Endothelial cell of umbilical vein (primary cell): ENCODE measurements at regions of chr14 and their contacts with region 1.

Region 1: DNA sequence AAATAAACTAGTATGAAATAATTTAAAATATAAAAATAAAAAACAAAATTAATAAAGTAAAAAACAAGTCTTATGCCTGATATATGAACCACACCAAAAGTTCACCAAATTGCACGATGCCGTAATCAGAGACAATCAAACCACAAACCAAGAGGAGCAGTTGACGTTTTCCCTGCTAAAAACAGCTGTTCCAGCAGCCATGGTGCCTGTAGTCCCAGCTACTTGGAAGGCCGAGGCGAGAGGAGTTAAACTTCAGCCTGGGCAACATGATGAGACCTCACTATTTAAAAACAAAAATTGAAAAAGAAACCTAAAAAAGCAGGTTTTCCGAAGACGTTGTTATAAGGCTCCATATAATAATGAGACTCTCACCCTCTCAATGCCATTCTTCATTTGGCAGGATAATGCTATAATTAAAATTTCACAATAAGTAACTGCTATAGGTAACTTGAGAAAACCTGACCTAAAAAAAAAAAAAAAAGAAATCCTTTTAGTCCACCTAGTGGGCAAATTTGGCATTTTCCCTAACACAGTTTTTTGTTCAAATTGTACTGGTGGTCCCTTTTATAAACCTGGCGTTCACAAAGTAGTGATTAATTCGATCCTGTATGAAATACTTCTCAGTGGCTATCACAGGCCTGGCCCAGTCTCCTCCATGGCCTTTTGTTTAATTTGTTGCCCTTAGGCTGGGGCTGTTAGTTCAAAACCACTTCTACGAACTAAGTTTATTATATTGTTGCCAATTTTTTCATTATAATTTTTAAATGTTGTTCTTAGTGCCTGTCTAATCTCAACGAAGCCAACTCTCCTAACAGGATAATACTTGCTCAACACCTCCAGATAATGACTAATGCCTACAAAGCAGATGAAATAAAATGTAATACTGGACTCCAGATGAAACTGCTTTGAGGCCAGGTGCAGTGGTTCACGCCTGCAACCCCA is 62.1 kb downstream of the TNFAIP2 start:
- DNase-seq: peak; percentile 71
- H3K4me3 ChIP-seq: no peak overlapping the region
- H3K27ac ChIP-seq: no peak overlapping the region
- H3K4me1 ChIP-seq: no peaks in the 10 kb centered on the region
- H3K27me3 ChIP-seq: peaks cover 17 to 22% of the 10 kb centered on the region in 2 experiments
- CTCF ChIP-seq: peak; percentile 36 to 47
- POLR2A ChIP-seq: no peak

Region 2: DNA sequence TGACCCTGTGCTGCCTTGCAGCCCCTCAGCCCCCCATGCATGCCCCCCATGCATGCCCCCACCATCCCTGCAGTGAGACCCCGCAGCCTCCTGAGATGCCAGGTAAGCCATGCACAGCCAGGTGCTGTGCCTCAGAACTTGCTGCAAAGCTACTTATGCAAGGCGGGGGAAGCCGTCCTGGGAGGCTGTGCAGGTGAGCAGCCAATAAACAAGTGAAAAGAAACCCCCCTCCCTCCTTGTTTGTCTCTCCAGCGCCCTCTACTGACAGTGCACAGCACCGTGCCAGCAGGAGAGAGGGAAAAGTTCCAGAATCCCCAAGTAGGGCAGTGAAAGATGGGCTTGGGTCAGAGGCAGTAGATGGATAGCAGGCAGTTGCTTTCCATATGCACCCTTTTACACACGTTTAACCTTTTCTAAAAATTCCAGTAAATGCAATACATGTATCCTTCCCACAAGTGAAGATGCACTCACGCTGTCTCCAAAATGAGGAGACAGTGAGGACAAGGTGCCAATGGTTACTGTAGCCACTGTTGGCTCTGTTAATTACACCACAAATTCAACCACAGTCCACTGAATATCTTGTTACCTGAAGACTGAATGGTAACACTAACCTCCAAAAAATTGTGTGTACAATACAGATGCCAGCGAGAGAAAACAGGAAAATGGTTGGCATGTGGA is 44.1 kb before region 1 on chr14:
- CTCF ChIA-PET with region 1: interaction called, 3 read pairs
- POLR2A ChIA-PET with region 1: no interaction called
- dilution Hi-C with region 1: no loop called
- intact Hi-C with region 1: loop called (anchors 5 kb)
- DNase-seq: peak; percentile 41
- H3K4me3 ChIP-seq: no peak overlapping the region
- H3K27ac ChIP-seq: no peak overlapping the region
- H3K4me1 ChIP-seq: no peaks in the 10 kb centered on the region
- H3K27me3 ChIP-seq: peaks cover 26 to 38% of the 10 kb centered on the region in 2 experiments
- CTCF ChIP-seq: peak; percentile 75 to 80
- POLR2A ChIP-seq: no peak

Region 3: GRCh38 chr14:103243764-103244737 is 58.7 kb after region 1 on chr14:
- CTCF ChIA-PET with region 1: no interaction called
- POLR2A ChIA-PET with region 1: no interaction called
- dilution Hi-C with region 1: no loop called
- intact Hi-C with region 1: no loop called
- DNase-seq: no peak
- H3K4me3 ChIP-seq: no peak overlapping the region
- H3K27ac ChIP-seq: no peak overlapping the region
- H3K4me1 ChIP-seq: peaks cover 8% of the 10 kb centered on the region
- H3K27me3 ChIP-seq: peaks cover 0 to 9% of the 10 kb centered on the region in 2 experiments
- CTCF ChIP-seq: no peak
- POLR2A ChIP-seq: no peak

Region 4: DNA sequence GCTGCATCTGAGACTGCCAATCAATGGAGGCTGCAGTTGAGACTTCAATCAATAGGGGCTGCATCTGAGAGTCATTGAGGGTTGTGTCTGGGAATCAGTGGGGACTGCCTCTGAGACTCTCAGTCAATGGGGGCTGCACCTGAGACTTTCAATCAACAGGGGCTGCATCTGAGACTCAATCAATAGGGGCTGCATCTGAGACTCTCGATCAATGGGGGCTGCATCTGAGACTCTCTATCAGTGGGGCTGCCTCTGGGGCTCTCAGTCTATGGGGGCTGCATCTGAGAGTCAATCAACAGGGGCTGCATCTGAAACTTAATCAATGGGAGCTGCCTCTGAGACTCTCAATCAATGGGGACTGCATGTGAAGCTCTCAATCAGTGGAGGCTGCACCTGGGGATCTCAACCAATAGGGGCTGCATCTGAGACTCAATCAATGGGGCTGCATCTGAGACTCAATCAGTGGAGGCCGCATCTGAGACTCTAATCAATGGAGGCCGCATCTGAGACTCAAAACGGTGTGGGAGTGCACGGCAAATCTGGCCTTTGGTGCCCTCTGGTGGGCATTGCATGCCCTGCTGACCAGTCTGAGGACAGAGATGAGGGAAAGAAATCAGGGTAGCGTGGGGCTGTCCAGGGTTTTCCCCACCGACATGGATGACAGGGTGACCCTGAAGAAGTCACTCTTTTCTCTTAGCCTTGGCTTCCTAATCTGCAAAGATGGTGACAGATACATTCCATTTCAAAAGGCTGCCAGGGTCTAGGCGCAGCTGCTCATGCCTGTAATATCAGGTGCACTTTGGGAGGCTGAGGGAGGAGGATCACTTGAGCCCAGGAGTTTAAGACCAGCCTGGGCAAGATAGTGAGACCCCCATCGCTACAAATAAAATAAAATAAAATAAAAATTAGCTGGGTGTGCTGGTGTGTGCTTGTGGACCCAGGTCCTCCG is 107.4 kb after region 1 on chr14:
- CTCF ChIA-PET with region 1: interaction called, 45 read pairs
- POLR2A ChIA-PET with region 1: no interaction called
- dilution Hi-C with region 1: no loop called
- intact Hi-C with region 1: loop called (anchors 1 kb)
- DNase-seq: peak; percentile 53
- H3K4me3 ChIP-seq: no peak overlapping the region
- H3K27ac ChIP-seq: no peak overlapping the region
- H3K4me1 ChIP-seq: no peaks in the 10 kb centered on the region
- H3K27me3 ChIP-seq: peaks cover 0 to 4% of the 10 kb centered on the region in 2 experiments
- CTCF ChIP-seq: peak; percentile 90
- POLR2A ChIP-seq: no peak